Mammary epithelial cell (primary cell): ENCODE measurements at regions of chr2 and their contacts with region 1.

Region 1: GRCh38 chr2:215609089-215610032 is 173.5 kb upstream of the FN1 start:
- DNase-seq: peak; percentile 98
- H3K4me3 ChIP-seq: no peak overlapping the region
- H3K27ac ChIP-seq: peak overlapping the region; percentile 87
- H3K4me1 ChIP-seq: peaks cover 17% of the 10 kb centered on the region
- H3K27me3 ChIP-seq: no peaks in the 10 kb centered on the region
- CTCF ChIP-seq: no peak

Region 2: GRCh38 chr2:215410932-215411285 is 198.5 kb before region 1 on chr2:
- CTCF ChIA-PET with region 1: no interaction called
- dilution Hi-C with region 1: no loop called
- in situ Hi-C with region 1: no loop called
- intact Hi-C with region 1: no loop called
- DNase-seq: peak; percentile 86
- H3K4me3 ChIP-seq: no peak overlapping the region
- H3K27ac ChIP-seq: peak overlapping the region; percentile 43
- H3K4me1 ChIP-seq: peaks cover 31% of the 10 kb centered on the region
- H3K27me3 ChIP-seq: no peaks in the 10 kb centered on the region
- CTCF ChIP-seq: no peak

Region 3: GRCh38 chr2:215528555-215528954 is 80.8 kb before region 1 on chr2:
- CTCF ChIA-PET with region 1: no interaction called
- dilution Hi-C with region 1: no loop called
- in situ Hi-C with region 1: no loop called
- intact Hi-C with region 1: no loop called
- DNase-seq: peak; percentile 87
- H3K4me3 ChIP-seq: no peak overlapping the region
- H3K27ac ChIP-seq: peak overlapping the region; percentile 98
- H3K4me1 ChIP-seq: peaks cover 41% of the 10 kb centered on the region
- H3K27me3 ChIP-seq: no peaks in the 10 kb centered on the region
- CTCF ChIP-seq: no peak

Region 4: DNA sequence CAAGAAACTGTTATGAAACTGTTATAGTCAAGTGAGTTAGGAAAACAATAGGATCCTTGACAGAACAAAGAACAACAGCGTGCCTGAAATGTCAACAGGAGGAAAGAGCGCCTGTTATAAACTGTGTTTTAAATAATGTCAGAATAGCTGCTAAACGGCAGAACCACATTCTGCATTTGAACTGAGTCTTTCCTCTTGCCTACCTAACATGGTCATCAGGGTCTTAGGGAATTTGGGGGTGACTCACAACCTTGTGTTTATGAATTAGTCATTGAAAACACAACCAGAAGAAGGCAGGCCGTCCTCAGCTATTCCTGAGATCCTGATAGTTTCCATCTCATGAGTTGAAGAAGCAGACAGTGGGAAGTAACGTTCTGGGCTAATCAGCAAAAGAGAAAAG is 48.5 kb after region 1 on chr2:
- CTCF ChIA-PET with region 1: no interaction called
- dilution Hi-C with region 1: no loop called
- in situ Hi-C with region 1: no loop called
- intact Hi-C with region 1: no loop called
- DNase-seq: peak; percentile 95
- H3K4me3 ChIP-seq: no peak overlapping the region
- H3K27ac ChIP-seq: peak overlapping the region; percentile 50
- H3K4me1 ChIP-seq: peaks cover 48% of the 10 kb centered on the region
- H3K27me3 ChIP-seq: no peaks in the 10 kb centered on the region
- CTCF ChIP-seq: no peak

Region 5: DNA sequence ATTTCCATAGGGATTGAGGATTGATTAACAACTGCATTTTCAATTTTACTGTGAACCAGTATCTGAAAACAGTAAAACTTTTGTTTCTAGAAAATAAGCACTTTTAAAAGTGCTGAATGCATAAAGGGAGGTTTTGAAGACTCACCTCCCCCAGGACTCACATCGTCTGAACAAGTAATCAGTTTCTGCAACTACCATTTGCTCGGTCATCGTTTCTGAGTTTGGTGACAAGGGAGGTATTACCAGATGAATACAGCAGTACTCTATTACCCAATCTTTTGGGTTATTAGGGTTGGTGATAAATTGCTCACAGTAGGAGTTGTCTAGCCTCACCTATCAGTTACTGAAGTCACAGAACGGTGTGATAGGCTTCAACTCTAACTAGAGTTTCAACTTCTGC is 61.0 kb after region 1 on chr2:
- CTCF ChIA-PET with region 1: no interaction called
- dilution Hi-C with region 1: loop called (anchors 5 kb)
- in situ Hi-C with region 1: no loop called
- intact Hi-C with region 1: no loop called
- DNase-seq: no peak
- H3K4me3 ChIP-seq: no peak overlapping the region
- H3K27ac ChIP-seq: no peak overlapping the region
- H3K4me1 ChIP-seq: peaks cover 2% of the 10 kb centered on the region
- H3K27me3 ChIP-seq: no peaks in the 10 kb centered on the region
- CTCF ChIP-seq: no peak